ENCODE measurements at regions of chr12 and their contacts with region 1.

Region 1: DNA sequence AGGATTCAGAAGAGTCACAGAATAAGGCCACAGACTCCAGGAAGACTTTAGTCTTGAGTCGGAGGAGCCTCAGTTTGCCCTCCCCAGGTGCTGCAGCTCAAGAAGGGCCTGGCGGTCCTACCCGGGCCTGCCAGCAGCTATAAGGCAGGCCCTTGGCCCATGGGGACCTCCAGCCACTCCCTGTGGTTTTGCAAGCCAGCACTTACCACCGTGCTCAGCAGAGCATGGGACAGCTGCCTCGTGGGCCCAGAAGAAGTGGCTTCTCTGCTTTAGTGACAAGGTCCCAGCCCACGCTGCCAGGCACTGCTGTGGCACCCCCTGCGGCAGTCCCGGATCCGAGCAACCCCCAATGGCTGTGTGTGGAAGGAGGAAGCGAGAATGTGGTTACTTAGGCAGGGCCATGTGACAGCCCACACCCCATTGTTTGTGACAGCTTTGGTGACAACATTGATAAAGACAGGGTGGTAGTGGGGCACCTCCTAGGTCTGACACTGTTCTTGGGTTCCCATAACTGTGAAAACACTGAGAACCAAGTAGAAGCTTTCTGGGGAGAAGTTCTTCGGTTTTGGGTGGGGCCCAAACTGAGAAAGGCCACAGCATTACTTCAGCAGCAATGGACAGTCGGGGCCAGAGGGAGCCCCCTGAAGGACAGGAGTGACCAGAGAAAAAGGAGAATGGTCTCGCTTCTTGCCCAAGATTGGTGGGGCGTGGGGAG is at the start of gene SELPLG:
- DNase-seq: peak; percentile 95
- ATAC-seq: peak; percentile 53
- H3K4me3 Mint-ChIP-seq: peak within 1 kb of the TSS; percentile 100
- H3K27ac Mint-ChIP-seq: peak within 1 kb of the TSS; percentile 100
- H3K4me1 Mint-ChIP-seq: peaks cover 59% of the 10 kb centered on the region
- H3K27me3 Mint-ChIP-seq: no peaks in the 10 kb centered on the region
- total RNA-seq, gene SELPLG: 148 to 184 TPM

Region 2: DNA sequence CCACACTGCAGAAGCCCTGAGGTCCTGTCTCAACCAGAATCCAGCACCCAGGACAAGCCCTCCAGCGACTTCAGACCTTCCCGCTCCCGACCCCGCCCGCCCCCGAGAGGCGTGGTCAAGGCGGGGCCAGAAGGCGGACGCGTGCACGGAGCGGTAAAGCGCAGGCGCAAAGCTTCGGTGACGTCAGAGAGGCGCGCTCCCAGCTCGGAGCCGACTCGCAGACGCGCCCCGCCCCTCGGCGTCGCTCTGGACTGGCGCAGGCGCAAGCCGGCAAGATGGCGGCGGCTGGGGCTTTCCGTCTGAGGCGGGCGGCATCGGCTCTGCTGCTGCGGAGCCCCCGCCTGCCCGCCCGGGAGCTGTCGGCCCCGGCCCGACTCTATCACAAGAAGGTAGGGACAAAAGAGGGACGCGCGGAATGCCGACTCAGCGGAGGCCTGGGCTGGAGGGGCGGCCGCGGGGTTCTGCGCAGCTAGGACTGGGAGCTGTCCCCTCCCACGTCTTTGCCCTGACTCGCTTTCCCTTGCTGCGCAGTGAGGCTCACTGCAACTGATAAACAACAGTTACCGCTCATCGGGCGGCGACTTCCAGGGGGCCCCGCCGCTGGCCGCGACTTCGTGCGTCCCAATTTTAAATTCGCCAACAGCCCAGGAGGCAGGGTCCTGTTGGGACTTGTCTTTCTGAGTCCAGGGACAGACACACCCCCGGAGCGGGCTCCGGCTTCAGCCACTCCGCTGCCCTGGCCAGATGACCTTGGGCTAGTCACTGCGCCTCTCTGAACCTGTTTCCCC is 71.1 kb before region 1 on chr12 and contains the start of gene ISCU:
- CTCF ChIA-PET with region 1: interaction called, 39 read pairs
- DNase-seq: peak; percentile 98
- ATAC-seq: peak; percentile 75
- H3K4me3 Mint-ChIP-seq: peak within 1 kb of the TSS; percentile 97
- H3K27ac Mint-ChIP-seq: peak within 1 kb of the TSS; percentile 99
- H3K4me1 Mint-ChIP-seq: peaks cover 62% of the 10 kb centered on the region
- H3K27me3 Mint-ChIP-seq: no peaks in the 10 kb centered on the region
- total RNA-seq, gene ISCU: 64.2 to 86.9 TPM

Region 3: DNA sequence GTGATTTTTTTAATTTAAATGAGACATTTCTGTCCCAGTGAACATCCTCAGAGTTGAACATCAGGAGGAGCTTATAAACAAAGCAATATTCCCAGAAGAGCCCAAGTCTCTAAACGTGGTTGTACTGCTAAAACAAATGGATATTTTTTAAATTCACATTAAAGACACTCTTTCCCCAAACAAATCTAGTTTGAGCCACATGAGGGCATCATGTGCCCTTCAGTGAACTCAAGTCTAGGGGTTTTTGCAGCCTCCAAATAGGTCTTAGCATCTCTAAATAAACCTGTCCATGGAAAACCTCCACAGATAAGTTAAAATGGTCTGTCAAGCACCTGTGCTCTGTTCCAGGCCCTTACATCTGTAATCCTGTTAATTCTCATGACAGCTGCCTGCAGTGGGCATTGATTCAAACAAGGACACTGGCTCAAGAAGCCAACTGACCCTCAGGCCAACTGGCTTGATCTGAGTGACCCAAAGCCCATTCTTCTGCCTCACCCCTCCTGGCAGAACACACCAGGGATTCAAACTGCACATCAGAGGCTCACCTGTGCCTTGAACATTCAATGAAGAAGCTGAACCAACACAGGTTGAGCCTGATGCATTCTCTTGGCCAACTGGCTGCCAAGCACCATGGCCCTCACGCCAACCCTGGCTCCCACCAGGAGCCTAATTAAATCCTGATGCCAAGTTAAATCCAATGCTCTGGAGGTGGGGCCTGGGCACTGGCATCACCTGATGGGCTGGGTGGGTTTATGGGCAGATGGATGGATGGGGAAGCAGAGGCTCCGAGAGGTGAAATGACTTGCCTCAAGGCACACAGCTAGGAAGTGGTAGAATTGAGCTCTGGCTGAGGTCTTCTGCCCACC is 62.7 kb before region 1 on chr12:
- CTCF ChIA-PET with region 1: interaction called, 32 read pairs
- DNase-seq: no peak
- ATAC-seq: no peak
- H3K4me3 Mint-ChIP-seq: no peak overlapping the region
- H3K27ac Mint-ChIP-seq: no peak overlapping the region
- H3K4me1 Mint-ChIP-seq: peaks cover 85% of the 10 kb centered on the region
- H3K27me3 Mint-ChIP-seq: peaks cover 3% of the 10 kb centered on the region

Region 4: DNA sequence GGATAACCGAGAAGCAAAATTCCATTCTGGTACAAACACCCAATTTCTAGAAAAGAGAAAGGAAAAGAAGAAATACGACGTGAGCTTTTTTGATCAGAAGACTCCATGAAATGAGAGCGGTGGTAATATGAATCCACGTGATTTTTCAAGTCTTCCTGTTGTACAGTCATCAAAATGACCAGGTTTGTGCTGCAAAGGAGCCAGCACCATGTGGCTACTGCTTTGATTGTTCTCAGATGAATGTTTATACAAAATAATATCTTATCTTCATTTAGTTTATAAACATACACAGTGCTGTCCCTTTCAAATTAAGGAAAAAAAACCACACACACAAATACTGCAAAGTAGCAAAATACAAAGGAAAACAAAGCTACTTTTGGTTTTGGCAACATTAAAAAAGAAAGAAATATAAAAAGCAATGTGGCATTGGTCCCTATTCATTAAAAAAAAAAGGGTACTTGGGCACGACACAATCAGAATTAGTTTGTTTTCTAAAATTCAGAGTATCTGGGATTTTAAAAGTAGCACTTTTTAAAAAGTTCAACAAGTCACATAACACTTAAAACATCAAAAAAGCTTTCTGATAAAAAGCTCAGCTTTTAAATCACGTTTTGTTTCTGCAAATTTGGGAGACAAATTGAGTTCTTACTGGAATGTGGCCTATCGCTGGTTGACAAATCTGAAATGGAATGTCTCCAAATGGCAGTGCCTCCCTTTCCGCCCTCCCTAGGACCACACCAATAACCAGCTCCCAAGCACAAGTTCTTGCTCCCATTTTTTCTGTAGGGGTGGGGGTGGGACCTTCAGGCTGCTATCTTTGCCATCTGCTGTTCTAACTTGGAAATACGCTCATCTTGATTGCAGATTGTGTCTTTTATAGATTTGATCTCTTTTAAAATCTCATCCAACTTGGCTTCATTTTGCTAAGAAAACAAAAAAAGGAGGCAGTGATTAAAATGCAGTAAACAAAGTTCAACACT is 13.2 kb after region 1 on chr12:
- CTCF ChIA-PET with region 1: interaction called, 11 read pairs
- DNase-seq: no peak
- ATAC-seq: peak; percentile 27
- H3K4me3 Mint-ChIP-seq: no peak overlapping the region
- H3K27ac Mint-ChIP-seq: peak overlapping the region; percentile 22
- H3K4me1 Mint-ChIP-seq: peaks cover 25% of the 10 kb centered on the region
- H3K27me3 Mint-ChIP-seq: no peaks in the 10 kb centered on the region

Region 5: GRCh38 chr12:108691175-108691997 is 57.7 kb after region 1 on chr12:
- CTCF ChIA-PET with region 1: interaction called, 16 read pairs
- DNase-seq: peak; percentile 91
- ATAC-seq: peak; percentile 83
- H3K4me3 Mint-ChIP-seq: peak overlapping the region; percentile 68
- H3K27ac Mint-ChIP-seq: peak overlapping the region; percentile 90
- H3K4me1 Mint-ChIP-seq: peaks cover 68% of the 10 kb centered on the region
- H3K27me3 Mint-ChIP-seq: no peaks in the 10 kb centered on the region

Measured in activated CD8-positive, alpha-beta memory T cell treated with anti-CD3 and anti-CD28 coated beads, Interleukin-2, amount 10 ng/mL, durations not matched to agents 7 days and 5 days (primary cell).